ENCODE measurements at regions of chr18 and their contacts with region 1.

Region 1: GRCh38 chr18:22624151-22624550 is 206.4 kb upstream of the CTAGE1 start:
- DNase-seq: no peak
- H3K4me3 ChIP-seq: no peak overlapping the region
- H3K27ac ChIP-seq: no peak overlapping the region
- H3K4me1 ChIP-seq: no peaks in the 10 kb centered on the region
- H3K27me3 ChIP-seq: no peaks in the 10 kb centered on the region
- CTCF ChIP-seq: no peak

Region 2: DNA sequence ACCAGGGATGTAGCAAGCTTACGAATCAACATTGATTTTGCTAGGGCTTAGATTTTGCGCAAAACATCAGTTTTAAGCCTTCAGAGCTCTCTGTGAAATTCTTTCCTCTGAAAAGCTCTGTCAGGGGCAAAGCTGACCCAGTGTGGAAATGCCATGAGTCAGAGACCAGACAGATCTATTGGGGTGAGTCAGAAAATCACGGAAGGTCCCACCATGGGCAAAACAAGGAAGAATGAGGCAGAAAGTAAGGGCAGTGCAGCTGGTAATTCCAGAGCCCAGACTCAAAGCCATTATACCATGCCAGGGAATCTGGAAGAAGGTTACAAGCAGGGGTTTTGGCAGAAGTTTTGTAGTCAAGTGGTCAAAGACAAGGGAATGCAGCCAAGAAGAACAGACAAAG is 50.1 kb after region 1 on chr18:
- CTCF ChIA-PET with region 1: no interaction called
- dilution Hi-C with region 1: no loop called
- in situ Hi-C with region 1: no loop called
- intact Hi-C with region 1: loop called (anchors 5 kb)
- DNase-seq: peak; percentile 88
- H3K4me3 ChIP-seq: no peak overlapping the region
- H3K27ac ChIP-seq: no peak overlapping the region
- H3K4me1 ChIP-seq: peaks cover 11% of the 10 kb centered on the region
- H3K27me3 ChIP-seq: no peaks in the 10 kb centered on the region
- CTCF ChIP-seq: no peak